Cardiac septum (tissue), 1 donor: ENCODE measurements at regions of chr2 and their contacts with region 1.

Region 1: GRCh38 chr2:10449838-10450691 is 1.9 kb upstream of the ODC1 start:
- DNase-seq: no peak

Region 2: GRCh38 chr2:10331027-10331701 is 118.9 kb before region 1 on chr2:
- intact Hi-C with region 1: no loop called
- DNase-seq: peak; percentile 93

Region 3: DNA sequence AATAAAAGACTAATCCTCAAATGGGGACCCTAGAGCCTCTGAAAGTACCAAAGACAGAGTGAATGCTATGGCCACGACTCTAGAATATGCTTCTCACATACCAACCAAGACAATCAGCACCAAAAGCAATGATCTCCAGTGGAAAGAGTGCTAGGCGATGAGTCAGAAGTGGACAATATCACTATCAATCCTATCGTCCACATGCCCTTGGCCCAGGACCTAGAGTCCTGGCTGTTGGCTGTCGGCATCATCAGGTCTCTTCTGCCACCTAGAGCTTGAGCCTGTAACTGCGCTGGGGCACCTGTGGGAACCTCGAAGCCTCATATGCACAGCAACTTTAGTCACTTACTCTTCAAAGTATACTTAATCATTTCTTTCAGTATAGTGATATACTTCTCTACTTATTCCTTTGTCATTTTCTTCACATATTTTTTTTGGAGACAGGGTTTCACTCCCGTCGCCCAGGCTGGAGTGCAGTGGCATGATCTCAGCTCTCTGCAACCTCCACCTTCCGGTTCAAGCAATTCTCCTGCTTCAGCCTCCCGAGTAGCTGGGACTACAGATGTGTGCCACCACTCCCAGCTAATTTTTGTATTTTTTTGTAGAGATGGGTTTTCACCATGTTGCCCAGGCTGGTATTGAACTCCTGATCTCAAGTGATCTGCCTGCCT is 210.0 kb after region 1 on chr2:
- intact Hi-C with region 1: loop called (anchors 5 kb)
- DNase-seq: no peak